ENCODE measurements at regions of chr10 and their contacts with region 1.

Region 1: GRCh38 chr10:13816195-13816926 is 229.6 kb downstream of the PRPF18 start:
- DNase-seq: no peak
- H3K4me3 ChIP-seq: no peak overlapping the region
- H3K4me3 Mint-ChIP-seq: no peak overlapping the region
- H3K27ac Mint-ChIP-seq: no peak overlapping the region
- H3K4me1 ChIP-seq: no peaks in the 10 kb centered on the region
- H3K4me1 Mint-ChIP-seq: no peaks in the 10 kb centered on the region
- H3K27me3 ChIP-seq: peaks cover 3% of the 10 kb centered on the region
- H3K27me3 Mint-ChIP-seq: peaks cover 15% of the 10 kb centered on the region
- CTCF ChIP-seq: no peak

Region 2: DNA sequence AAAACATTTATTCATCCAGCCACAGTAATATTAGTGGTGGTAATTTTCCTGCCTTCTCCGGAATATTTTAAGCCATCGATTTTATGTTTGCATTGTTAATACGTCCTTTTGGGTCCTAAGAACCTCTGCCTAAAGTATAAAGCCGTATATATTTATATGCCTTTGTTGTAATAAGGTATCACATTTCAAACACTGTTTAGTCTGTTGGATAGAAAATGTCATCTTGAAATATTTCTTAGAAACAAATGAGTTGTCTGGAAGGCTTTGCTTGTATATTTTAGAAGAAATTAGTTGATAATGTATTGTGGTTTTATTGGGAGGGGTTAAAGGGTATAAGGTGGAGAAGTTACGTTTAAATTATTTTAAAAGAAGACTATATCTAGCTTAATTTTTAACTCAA is 218.5 kb before region 1 on chr10:
- CTCF ChIA-PET with region 1: no interaction called
- POLR2A ChIA-PET with region 1: no interaction called
- intact Hi-C with region 1: no loop called
- DNase-seq: no peak
- H3K4me3 ChIP-seq: no peak overlapping the region
- H3K4me3 Mint-ChIP-seq: no peak overlapping the region
- H3K27ac Mint-ChIP-seq: no peak overlapping the region
- H3K4me1 ChIP-seq: no peaks in the 10 kb centered on the region
- H3K4me1 Mint-ChIP-seq: no peaks in the 10 kb centered on the region
- H3K27me3 ChIP-seq: no peaks in the 10 kb centered on the region
- H3K27me3 Mint-ChIP-seq: no peaks in the 10 kb centered on the region
- CTCF ChIP-seq: no peak

Region 3: GRCh38 chr10:13853854-13854253 is 37.5 kb after region 1 on chr10:
- CTCF ChIA-PET with region 1: no interaction called
- POLR2A ChIA-PET with region 1: no interaction called
- intact Hi-C with region 1: loop called (anchors 2 kb)
- DNase-seq: no peak
- H3K4me3 ChIP-seq: no peak overlapping the region
- H3K4me3 Mint-ChIP-seq: no peak overlapping the region
- H3K27ac Mint-ChIP-seq: no peak overlapping the region
- H3K4me1 ChIP-seq: no peaks in the 10 kb centered on the region
- H3K4me1 Mint-ChIP-seq: no peaks in the 10 kb centered on the region
- H3K27me3 ChIP-seq: no peaks in the 10 kb centered on the region
- H3K27me3 Mint-ChIP-seq: peaks cover 7% of the 10 kb centered on the region
- CTCF ChIP-seq: no peak